Natural killer cell (primary cell): ENCODE measurements at regions of chr3 and their contacts with region 1.

Region 1: DNA sequence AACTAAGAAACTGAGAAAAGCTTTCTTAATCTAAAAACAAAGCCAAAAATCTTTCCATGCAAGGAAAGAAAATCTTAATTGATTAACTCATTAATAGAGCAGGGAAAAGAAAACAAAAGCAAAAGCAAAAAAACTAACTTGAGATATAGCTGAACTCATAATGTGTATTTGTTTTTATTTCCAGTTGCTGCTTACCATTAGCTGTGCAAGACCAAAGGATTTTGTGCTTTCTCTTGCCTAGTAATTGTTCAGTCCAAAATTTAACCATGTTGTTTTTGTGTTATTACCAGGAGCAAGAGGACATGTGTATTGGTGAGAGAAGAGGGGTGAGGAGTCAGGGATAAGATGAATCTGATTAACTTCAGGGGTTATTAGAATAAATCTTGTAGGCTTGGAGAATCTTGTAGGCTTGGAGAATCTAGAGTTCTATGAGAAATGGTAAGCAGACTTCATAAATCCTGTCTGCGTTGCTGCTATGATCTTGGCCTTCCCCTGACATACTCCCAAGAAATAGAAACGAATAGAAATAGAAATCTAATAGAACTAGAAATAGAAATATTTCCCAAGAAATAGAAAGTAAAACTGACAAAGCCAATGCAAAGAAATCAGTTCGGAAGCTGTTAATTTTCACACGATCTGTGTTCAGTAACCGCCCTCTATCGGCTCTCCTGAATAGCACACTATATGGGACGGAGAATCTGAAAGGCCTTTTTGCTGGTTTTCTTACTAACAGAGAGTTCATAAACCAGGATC is 72.6 kb upstream of the TNFSF10 start:
- DNase-seq: peak in 1 of 2 donors; percentile 82
- ATAC-seq: peak; percentile 57 to 81 (median 68)
- H3K4me3 ChIP-seq: peak overlapping the region; percentile 36
- H3K4me3 Mint-ChIP-seq: peak overlapping the region; percentile 88
- H3K27ac ChIP-seq: peak overlapping the region; percentile 70
- H3K27ac Mint-ChIP-seq: peak overlapping the region; percentile 79 to 88
- H3K4me1 ChIP-seq: peaks cover 42% of the 10 kb centered on the region
- H3K4me1 Mint-ChIP-seq: peaks cover 50 to 51% of the 10 kb centered on the region in 2 donors
- H3K27me3 ChIP-seq: no peaks in the 10 kb centered on the region
- H3K27me3 Mint-ChIP-seq: no peaks in the 10 kb centered on the region
- CTCF ChIP-seq: peak; percentile 93

Region 2: DNA sequence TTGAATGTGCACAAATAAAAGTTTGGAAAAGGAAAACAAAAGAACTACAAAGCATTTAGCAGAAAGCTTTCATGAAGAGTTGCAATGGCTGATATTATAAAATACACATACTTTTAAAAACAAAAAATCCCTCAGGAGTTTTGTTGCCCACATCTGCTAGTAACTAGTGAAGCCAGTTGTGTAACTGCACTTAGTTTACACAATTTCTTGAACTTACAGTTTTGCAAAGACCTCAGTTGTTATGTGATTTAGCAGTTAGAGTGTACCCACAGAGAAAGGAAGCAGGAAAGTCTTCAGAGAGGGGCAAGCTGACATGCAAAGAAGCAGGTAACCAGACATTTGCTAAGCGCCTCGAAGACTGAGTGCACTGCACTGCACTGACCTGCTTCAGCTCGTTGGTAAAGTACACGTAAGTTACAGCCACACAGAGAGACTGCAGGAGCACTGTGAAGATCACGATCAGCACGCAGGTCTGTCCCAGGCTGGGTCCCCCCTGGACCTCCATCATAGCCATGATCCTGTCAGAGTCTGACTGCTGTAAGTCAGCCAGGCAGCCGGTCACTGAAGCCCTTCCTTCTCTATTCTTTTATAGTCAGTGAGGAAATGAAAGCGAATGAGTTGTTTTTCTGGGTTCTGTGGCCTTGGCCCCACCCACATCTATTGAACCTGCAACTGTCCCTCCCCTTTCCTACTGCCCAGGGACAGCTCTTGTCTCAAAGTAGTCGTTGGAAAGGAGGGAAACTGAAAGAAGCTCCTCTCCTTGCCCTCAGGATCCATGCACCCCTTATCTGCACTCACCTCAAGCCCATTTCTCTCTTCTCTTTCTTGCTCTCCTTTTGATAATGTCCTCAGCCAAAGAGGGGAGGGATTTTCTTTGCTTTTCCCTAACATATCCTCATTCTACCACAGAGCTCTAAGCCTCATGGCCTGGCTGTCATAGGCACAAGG is 72.7 kb before region 1 on chr3 and contains the start of gene TNFSF10:
- intact Hi-C with region 1: loop called (anchors 2 kb)
- DNase-seq: peak; percentile 44 to 77
- ATAC-seq: peak; percentile 83 to 89 (median 85)
- H3K4me3 ChIP-seq: peak within 1 kb of the TSS; percentile 71
- H3K4me3 Mint-ChIP-seq: peak within 1 kb of the TSS; percentile 85
- H3K27ac ChIP-seq: peak within 1 kb of the TSS; percentile 87
- H3K27ac Mint-ChIP-seq: peak within 1 kb of the TSS; percentile 87 to 93
- H3K4me1 ChIP-seq: peaks cover 15% of the 10 kb centered on the region
- H3K4me1 Mint-ChIP-seq: peaks cover 43 to 57% of the 10 kb centered on the region in 2 donors
- H3K27me3 ChIP-seq: no peaks in the 10 kb centered on the region
- H3K27me3 Mint-ChIP-seq: no peaks in the 10 kb centered on the region
- CTCF ChIP-seq: no peak
- total RNA-seq, gene TNFSF10: 9.5 to 27.7 (median 18.4) TPM

Region 3: GRCh38 chr3:172580680-172581401 is 15.0 kb before region 1 on chr3:
- intact Hi-C with region 1: no loop called
- DNase-seq: peak in 1 of 2 donors; percentile 20
- ATAC-seq: peak; percentile 56 to 61 (median 57)
- H3K4me3 ChIP-seq: no peak overlapping the region
- H3K4me3 Mint-ChIP-seq: peak overlapping the region; percentile 83
- H3K27ac ChIP-seq: peak overlapping the region; percentile 63
- H3K27ac Mint-ChIP-seq: peak overlapping the region; percentile 71 to 94
- H3K4me1 ChIP-seq: peaks cover 28% of the 10 kb centered on the region
- H3K4me1 Mint-ChIP-seq: peaks cover 70 to 76% of the 10 kb centered on the region in 2 donors
- H3K27me3 ChIP-seq: no peaks in the 10 kb centered on the region
- H3K27me3 Mint-ChIP-seq: no peaks in the 10 kb centered on the region
- CTCF ChIP-seq: no peak

Region 4: GRCh38 chr3:172635588-172635987 is 39.8 kb after region 1 on chr3:
- intact Hi-C with region 1: loop called (anchors 5 kb)
- DNase-seq: peak; percentile 27 to 40
- ATAC-seq: peak; percentile 97 to 100 (median 98)
- H3K4me3 ChIP-seq: no peak overlapping the region
- H3K4me3 Mint-ChIP-seq: peak overlapping the region; percentile 40
- H3K27ac ChIP-seq: peak overlapping the region; percentile 81
- H3K27ac Mint-ChIP-seq: peak overlapping the region; percentile 89 to 92
- H3K4me1 ChIP-seq: peaks cover 8% of the 10 kb centered on the region
- H3K4me1 Mint-ChIP-seq: peaks cover 26 to 27% of the 10 kb centered on the region in 2 donors
- H3K27me3 ChIP-seq: no peaks in the 10 kb centered on the region
- H3K27me3 Mint-ChIP-seq: no peaks in the 10 kb centered on the region
- CTCF ChIP-seq: no peak

Region 5: GRCh38 chr3:172666873-172667694 is 71.3 kb after region 1 on chr3:
- intact Hi-C with region 1: loop called (anchors 2 kb)
- DNase-seq: peak; percentile 68 to 87
- ATAC-seq: peak; percentile 95 to 99 (median 99)
- H3K4me3 ChIP-seq: no peak overlapping the region
- H3K4me3 Mint-ChIP-seq: peak overlapping the region; percentile 87
- H3K27ac ChIP-seq: no peak overlapping the region
- H3K27ac Mint-ChIP-seq: peak overlapping the region; percentile 84 to 85
- H3K4me1 ChIP-seq: peaks cover 21% of the 10 kb centered on the region
- H3K4me1 Mint-ChIP-seq: peaks cover 38 to 44% of the 10 kb centered on the region in 2 donors
- H3K27me3 ChIP-seq: no peaks in the 10 kb centered on the region
- H3K27me3 Mint-ChIP-seq: no peaks in the 10 kb centered on the region
- CTCF ChIP-seq: peak; percentile 82

Region 6: DNA sequence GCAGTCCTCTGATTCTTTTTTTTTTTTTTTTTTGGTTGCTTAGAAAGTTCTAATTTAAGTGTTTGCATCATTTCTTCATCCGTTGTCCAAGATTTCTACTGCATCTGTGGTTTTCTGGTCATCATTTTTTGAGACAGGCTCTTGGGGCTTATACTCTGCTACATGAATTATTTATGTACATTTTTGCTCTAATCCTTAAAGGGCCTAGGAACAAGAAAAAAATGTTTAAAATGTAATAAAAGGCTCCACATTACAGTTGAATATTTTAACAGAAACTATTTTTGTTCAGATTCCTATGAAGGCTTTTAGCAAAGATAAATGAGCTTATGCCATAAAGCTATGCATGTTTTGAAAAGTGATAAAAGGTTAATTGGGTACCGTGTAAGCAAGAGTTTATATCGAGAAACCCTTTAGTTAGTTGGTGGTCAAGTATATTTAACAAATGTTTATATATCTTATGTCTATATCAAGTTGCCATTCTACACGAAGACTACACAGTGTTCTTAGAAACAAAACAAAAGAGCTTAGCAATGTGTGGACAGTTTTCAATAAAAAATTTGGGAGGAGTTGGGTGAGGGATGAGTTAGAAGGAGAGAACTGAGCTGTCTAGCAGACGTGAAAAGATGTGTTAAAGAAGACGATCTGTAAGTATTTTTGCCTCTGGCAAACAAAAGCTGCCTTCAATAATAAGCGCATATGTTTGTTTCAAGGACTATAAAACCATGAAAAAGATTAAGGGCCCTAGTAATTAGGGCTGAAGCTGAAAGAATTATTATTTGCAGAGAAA is 1699.7 kb after region 1 on chr3:
- intact Hi-C with region 1: no loop called
- DNase-seq: no peak
- ATAC-seq: no peak
- H3K4me3 ChIP-seq: no peak overlapping the region
- H3K4me3 Mint-ChIP-seq: no peak overlapping the region
- H3K27ac ChIP-seq: no peak overlapping the region
- H3K27ac Mint-ChIP-seq: no peak overlapping the region
- H3K4me1 ChIP-seq: no peaks in the 10 kb centered on the region
- H3K4me1 Mint-ChIP-seq: no peaks in the 10 kb centered on the region
- H3K27me3 ChIP-seq: no peaks in the 10 kb centered on the region
- H3K27me3 Mint-ChIP-seq: no peaks in the 10 kb centered on the region
- CTCF ChIP-seq: no peak

Region 7: DNA sequence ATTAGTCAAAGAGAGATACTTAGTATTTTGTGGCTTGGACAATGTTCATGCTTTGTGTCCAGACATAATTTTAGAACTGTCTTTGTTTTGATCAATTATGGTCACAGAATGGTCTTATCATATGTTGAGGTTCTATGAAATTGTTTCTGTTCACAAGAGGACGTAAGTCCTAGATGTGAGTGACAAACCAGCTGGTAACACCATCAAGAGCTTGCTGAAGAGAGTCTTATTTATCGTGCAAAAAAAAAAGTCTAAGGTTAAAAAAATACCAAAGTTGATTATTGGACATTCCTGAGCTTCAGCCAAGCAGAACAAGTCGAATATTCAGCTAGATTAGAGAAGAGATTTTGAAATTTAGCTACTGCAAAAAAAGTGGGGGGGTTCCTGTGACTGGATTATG is 1767.4 kb after region 1 on chr3:
- intact Hi-C with region 1: no loop called
- DNase-seq: no peak
- ATAC-seq: no peak
- H3K4me3 ChIP-seq: no peak overlapping the region
- H3K4me3 Mint-ChIP-seq: no peak overlapping the region
- H3K27ac ChIP-seq: no peak overlapping the region
- H3K27ac Mint-ChIP-seq: no peak overlapping the region
- H3K4me1 ChIP-seq: no peaks in the 10 kb centered on the region
- H3K4me1 Mint-ChIP-seq: no peaks in the 10 kb centered on the region
- H3K27me3 ChIP-seq: no peaks in the 10 kb centered on the region
- H3K27me3 Mint-ChIP-seq: no peaks in the 10 kb centered on the region
- CTCF ChIP-seq: no peak